Activated CD8-positive, alpha-beta memory T cell treated with anti-CD3 and anti-CD28 coated beads, Interleukin-2, amount 10 ng/mL, durations not matched to agents 7 days and 5 days (primary cell): ENCODE measurements at regions of chr1 and their contacts with region 1.

Region 1: GRCh38 chr1:119294722-119295121 is 73.9 kb upstream of the HAO2 start:
- DNase-seq: no peak
- ATAC-seq: no peak
- H3K4me3 Mint-ChIP-seq: no peak overlapping the region
- H3K27ac Mint-ChIP-seq: no peak overlapping the region
- H3K4me1 Mint-ChIP-seq: no peaks in the 10 kb centered on the region
- H3K27me3 Mint-ChIP-seq: peaks cover 19% of the 10 kb centered on the region

Region 2: DNA sequence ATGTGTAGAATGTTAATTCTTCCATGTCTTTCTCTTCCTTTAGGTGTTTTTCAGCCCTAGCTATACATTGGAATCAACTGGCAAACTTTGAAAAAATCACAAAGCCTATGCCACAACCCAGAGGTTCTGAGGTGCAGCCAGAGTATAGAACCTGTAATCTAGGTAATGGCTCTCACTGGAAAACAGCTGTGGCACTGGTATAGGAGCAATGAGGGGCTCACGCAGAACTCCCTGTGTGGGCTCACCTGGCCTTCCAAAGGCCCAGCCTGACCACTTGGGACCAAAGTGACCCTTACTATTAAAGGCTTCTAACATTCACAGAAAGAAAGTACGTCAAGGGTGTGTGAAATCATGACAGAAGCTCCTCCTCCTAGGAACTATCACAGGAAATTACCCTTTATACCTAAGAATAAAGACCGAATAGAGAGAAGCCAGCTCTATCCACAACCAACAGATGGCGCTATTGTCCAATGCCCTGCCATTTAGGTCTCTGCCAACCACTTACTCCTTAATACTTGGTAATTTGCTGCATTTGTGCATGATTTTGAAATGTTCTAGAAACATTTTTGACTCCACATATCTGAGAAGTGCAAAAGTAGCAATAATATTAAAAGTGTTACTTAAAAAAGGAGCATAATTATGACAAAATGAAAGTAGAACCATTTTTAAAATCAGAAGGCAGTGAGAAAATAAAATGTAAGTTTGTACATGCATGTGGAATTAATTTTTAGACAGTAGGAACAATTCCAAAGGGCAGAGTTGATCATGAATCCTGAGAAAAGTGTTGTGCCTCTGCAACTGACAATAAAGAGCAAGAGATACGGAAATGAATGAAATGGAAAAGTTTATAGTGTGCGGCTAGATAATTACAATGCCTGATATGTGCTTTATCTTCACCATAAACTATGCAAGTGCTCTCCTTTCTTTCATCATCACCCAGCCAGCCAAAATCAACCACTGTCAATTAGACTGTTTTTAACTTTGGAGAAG is 19.3 kb before region 1 on chr1:
- CTCF ChIA-PET with region 1: interaction called, 11 read pairs
- DNase-seq: peak; percentile 55
- ATAC-seq: peak; percentile 60
- H3K4me3 Mint-ChIP-seq: no peak overlapping the region
- H3K27ac Mint-ChIP-seq: no peak overlapping the region
- H3K4me1 Mint-ChIP-seq: no peaks in the 10 kb centered on the region
- H3K27me3 Mint-ChIP-seq: peaks cover 14% of the 10 kb centered on the region